ENCODE measurements at regions of chr10 and their contacts with region 1.

Region 1: DNA sequence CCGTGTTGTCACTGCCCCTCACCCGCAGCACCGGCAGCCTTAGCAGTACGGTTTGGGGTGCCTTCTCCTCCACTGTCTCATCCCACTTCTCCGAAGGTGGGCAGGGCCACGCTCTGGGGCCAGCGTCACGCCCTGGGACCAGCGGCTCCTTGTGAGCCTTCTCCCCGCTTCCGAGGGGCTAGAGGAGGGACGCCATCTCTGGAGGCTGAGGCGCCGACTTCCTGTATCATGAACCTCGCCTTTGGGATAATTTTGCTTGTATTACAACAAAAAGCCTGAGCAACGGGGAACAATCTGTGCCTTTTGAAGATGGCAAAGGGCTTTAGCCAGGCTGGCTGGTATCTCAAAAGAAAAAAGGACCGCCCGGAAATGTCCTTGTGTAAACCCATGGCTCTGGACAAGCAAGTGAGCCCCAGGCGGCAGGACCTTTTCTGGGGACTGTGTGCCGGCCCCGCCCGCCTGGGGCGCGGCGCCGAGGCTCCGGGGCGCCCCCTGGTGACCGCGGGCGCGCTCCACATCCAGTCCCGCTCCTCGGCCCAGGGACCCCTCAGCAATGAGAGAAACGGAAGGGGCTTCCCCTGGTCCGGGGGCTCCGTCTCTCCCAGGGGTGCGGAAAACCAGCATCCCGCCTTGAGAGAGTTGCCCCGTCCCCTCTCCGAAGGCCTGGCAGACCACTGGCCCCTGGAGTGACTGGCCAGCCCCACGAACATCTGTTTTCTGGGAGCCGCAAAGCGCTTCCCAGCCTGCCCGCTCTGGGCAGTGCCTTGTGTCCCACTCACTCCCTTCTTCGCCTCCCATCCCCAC is 3.8 kb downstream of the DEPP1 start:
- DNase-seq: no peak
- H3K4me3 ChIP-seq: peak overlapping the region; percentile 50
- CTCF ChIP-seq: peak; percentile 85

Region 2: DNA sequence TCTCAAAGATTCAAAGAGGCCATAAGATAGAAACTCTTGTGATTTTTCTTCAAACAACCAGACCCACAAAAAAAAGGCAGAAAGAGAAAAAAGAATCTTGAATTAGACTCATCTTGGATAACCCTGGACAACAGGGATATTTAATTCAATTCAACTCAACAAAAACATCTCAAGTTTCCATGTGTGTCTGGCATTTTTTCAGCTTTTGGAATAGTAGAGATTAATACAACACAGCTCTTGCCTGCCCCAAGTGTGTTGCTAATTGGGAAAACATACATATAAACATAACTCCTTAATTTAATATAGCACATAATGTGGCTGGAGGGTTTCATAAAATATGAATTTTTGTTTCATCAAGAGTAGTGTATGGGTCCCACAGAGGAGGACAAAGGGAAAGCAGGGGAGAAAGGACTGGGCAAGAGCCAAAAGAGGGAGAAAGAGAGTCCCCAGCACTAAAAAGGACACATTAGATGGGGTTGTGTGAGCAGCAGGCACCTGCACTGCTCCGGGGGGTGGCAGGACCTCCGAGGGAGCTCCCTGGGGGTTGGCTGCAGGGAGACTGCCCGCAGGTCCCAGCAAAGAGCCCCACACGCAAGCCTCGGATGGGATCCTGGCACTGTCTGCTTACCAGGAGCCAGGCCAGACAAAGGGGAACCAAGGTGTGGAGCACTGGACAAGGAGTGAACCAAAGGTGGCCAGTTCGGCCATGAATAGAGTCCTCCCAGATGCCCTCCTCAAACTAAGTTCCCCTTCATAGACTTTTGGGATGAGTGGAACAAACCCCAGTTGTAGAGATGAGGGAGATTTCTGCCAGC is 129.3 kb before region 1 on chr10:
- CTCF ChIA-PET with region 1: no interaction called
- POLR2A ChIA-PET with region 1: no interaction called
- DNase-seq: no peak
- H3K4me3 ChIP-seq: no peak overlapping the region
- CTCF ChIP-seq: no peak

Region 3: GRCh38 chr10:44962870-44963738 is 11.7 kb before region 1 on chr10:
- CTCF ChIA-PET with region 1: interaction called, 51 read pairs
- POLR2A ChIA-PET with region 1: interaction called, 15 read pairs
- DNase-seq: no peak
- H3K4me3 ChIP-seq: no peak overlapping the region
- CTCF ChIP-seq: peak; percentile 21

Region 4: GRCh38 chr10:44990302-44990655 is 15.4 kb after region 1 on chr10:
- CTCF ChIA-PET with region 1: interaction called, 10 read pairs
- POLR2A ChIA-PET with region 1: interaction called, 11 read pairs
- DNase-seq: no peak
- H3K4me3 ChIP-seq: no peak overlapping the region
- CTCF ChIP-seq: peak; percentile 21

Measured in AG04449 (cell line).